Panc1 (cell line): ENCODE measurements at regions of chr5 and their contacts with region 1.

Region 1: DNA sequence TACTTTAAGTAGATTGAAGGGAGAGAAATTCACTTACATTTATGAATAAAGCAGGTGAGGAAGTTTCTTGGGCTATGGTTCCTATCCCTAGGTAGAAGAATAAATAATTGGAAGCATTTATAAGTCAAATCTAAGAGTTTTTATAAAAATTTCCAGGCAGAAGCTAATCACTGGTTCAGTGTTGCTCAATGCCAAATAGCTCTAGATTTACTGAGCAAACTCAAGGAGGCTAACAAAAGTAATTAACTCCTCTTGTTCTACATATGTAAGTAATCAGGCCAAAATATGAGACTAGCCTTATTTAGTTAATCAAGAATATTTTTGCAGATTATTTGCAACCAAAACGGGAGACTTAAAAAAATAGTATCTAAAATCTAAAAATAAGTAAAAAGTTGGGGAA is 472.3 kb downstream of the PLK2 start:
- DNase-seq: no peak
- ATAC-seq: no peak
- H3K4me3 ChIP-seq: no peak overlapping the region
- H3K27ac ChIP-seq: no peak overlapping the region; the same call in 1 of the 2 replicates
- H3K4me1 ChIP-seq: peaks cover 3% of the 10 kb centered on the region
- H3K27me3 ChIP-seq: no peaks in the 10 kb centered on the region
- CTCF ChIP-seq: no peak

Region 2: DNA sequence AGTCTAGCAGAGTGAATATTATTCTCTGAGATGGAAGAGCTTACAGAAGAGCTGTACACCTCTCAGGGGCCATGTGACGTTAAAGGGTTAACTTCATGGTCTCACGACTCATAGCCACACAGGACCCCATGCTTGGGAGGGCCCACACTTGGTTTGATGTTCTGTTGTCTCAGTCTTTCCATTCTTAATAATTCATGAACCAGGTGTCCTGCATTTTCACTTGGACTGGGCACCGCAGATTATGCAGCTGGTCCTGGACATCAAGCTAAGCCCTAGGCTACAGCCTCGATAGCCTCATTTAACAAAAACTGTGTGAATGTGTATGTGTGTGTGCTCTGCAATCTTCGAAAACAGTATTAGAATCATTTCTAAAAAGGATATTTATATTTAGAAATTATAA is 148.9 kb after region 1 on chr5:
- CTCF ChIA-PET with region 1: no interaction called
- POLR2A ChIA-PET with region 1: interaction called, 10 read pairs
- in situ Hi-C with region 1: no loop called
- intact Hi-C with region 1: no loop called
- DNase-seq: no peak
- ATAC-seq: no peak
- H3K4me3 ChIP-seq: no peak overlapping the region
- H3K27ac ChIP-seq: peak overlapping the region; percentile 48; the same call in 1 of the 2 replicates
- H3K4me1 ChIP-seq: peaks cover 11% of the 10 kb centered on the region
- H3K27me3 ChIP-seq: no peaks in the 10 kb centered on the region
- CTCF ChIP-seq: no peak